Prostate gland (tissue), 2 donors: ENCODE measurements at regions of chr1 and their contacts with region 1.

Region 1: GRCh38 chr1:28208818-28209441 is 23.9 kb downstream of the DNAJC8 start:
- DNase-seq: peak; percentile 30
- H3K4me3 ChIP-seq: no peak overlapping the region
- H3K27ac ChIP-seq: peak overlapping the region; percentile 21 to 25
- H3K4me1 ChIP-seq: peaks cover 2% of the 10 kb centered on the region
- H3K27me3 ChIP-seq: no peaks in the 10 kb centered on the region
- CTCF ChIP-seq: peak in 3 of 4 experiments; percentile 40 to 60 (median 58)
- POLR2A ChIP-seq: no peak

Region 2: DNA sequence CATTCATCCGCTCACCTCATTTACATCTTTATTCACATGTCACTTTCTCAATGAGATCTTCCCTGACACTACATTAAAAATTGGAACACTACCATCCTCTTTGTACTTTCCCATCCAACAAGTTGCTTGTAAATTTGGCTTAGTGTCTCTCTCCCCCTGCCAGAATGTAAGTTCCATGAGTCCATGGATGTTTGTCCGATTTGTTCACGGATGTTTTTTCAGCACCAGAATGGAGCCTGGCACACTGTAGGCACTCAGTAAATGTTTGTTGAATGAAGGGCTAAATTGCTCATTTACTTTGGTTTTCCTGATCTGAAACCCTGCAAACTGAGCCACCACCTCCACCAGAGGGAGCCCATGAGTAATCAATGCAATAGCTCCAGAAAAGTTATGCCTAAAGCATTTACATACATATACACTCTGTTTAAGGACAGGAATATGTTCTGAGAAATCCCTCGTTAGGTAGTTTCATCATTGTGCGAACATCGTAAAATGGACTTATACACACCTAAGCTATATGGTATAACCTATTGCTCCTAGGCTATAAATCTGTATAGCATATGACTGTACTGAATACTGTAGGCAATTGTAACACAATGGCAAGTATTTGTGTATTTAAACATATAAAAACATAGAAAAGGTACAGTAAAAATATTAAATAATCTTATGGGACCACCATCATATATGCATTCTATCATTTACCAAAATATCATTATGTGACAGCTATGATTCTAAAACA is 117.7 kb before region 1 on chr1:
- intact Hi-C with region 1: loop called (anchors 2 kb)
- DNase-seq: peak; percentile 79
- H3K4me3 ChIP-seq: no peak overlapping the region
- H3K27ac ChIP-seq: no peak overlapping the region
- H3K4me1 ChIP-seq: peaks cover 10% of the 10 kb centered on the region
- H3K27me3 ChIP-seq: no peaks in the 10 kb centered on the region
- CTCF ChIP-seq: peak; percentile 46 to 85 (median 80)
- POLR2A ChIP-seq: no peak